HEK293 (cell line): ENCODE measurements at regions of chr19 and their contacts with region 1.

Region 1: GRCh38 chr19:49200238-49200862 is 42.8 kb downstream of the TRPM4 start:
- H3K4me3 ChIP-seq: no peak overlapping the region
- H3K27ac ChIP-seq: no peak overlapping the region
- H3K4me1 ChIP-seq: no peaks in the 10 kb centered on the region
- CTCF ChIP-seq: no peak

Region 2: GRCh38 chr19:48999481-49000325 is 200.6 kb before region 1 on chr19:
- CTCF ChIA-PET with region 1: interaction called, 18 read pairs
- POLR2A ChIA-PET with region 1: no interaction called
- H3K4me3 ChIP-seq: no peak overlapping the region
- H3K27ac ChIP-seq: no peak overlapping the region
- H3K4me1 ChIP-seq: 0 out of 2 replicates have a peak, but pooled peaks cover 3% of the 10 kb centered on the region
- CTCF ChIP-seq: peak; percentile 59; the same call in 1 of the 2 replicates

Region 3: GRCh38 chr19:49097455-49098288 is 102.7 kb before region 1 on chr19:
- CTCF ChIA-PET with region 1: interaction called, 105 read pairs
- POLR2A ChIA-PET with region 1: interaction called, 7 read pairs
- H3K4me3 ChIP-seq: no peak overlapping the region
- H3K27ac ChIP-seq: peak overlapping the region; percentile 48
- H3K4me1 ChIP-seq: peaks cover 8% of the 10 kb centered on the region
- CTCF ChIP-seq: peak; percentile 94

Region 4: GRCh38 chr19:49113762-49114629 is 86.4 kb before region 1 on chr19 and contains the start of gene LIN7B:
- CTCF ChIA-PET with region 1: interaction called, 24 read pairs
- POLR2A ChIA-PET with region 1: interaction called, 5 read pairs
- H3K4me3 ChIP-seq: peak within 1 kb of the TSS; percentile 69
- H3K27ac ChIP-seq: peak within 1 kb of the TSS; percentile 84
- H3K4me1 ChIP-seq: peaks cover 14% of the 10 kb centered on the region
- CTCF ChIP-seq: peak; percentile 31; the same call in 1 of the 2 replicates

Region 5: GRCh38 chr19:49148784-49149651 is 51.3 kb before region 1 on chr19:
- CTCF ChIA-PET with region 1: interaction called, 70 read pairs
- POLR2A ChIA-PET with region 1: interaction called, 4 read pairs
- H3K4me3 ChIP-seq: peak overlapping the region; percentile 69
- H3K27ac ChIP-seq: peak overlapping the region; percentile 70
- H3K4me1 ChIP-seq: peaks cover 6% of the 10 kb centered on the region
- CTCF ChIP-seq: no peak

Region 6: DNA sequence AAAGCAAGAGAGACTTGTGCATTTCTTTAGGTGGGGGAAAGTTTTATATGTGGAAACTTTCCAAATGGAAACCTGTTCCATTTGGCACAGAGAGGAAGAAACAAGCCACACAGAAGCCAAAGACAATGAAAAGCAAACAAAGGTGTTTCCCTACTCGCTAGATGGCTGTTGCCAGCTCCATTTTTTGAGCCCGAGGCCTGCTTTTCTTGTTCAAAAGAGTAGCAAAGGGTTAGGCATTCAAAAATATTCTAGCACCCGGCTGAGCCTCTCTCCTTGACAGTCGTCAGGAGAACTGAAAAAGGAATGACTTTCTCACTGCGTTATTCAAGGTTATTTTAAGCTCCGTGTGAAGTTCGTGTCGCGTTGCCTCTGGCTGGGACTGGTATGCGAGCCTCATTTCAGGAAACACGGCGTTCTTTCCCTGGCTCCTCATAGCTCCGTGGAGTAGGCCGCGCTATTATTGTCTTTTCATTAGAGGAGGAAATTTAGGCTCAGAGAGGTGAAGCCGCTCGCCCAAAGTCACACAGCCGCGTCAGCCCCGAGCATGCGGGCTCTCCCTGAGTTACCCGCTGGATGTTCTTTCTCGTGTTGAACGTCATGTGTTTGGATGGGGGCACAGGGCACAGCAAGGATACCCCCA is 35.1 kb before region 1 on chr19:
- CTCF ChIA-PET with region 1: interaction called, 17 read pairs
- POLR2A ChIA-PET with region 1: no interaction called
- H3K4me3 ChIP-seq: no peak overlapping the region
- H3K27ac ChIP-seq: no peak overlapping the region
- H3K4me1 ChIP-seq: no peaks in the 10 kb centered on the region
- CTCF ChIP-seq: no peak

Region 7: DNA sequence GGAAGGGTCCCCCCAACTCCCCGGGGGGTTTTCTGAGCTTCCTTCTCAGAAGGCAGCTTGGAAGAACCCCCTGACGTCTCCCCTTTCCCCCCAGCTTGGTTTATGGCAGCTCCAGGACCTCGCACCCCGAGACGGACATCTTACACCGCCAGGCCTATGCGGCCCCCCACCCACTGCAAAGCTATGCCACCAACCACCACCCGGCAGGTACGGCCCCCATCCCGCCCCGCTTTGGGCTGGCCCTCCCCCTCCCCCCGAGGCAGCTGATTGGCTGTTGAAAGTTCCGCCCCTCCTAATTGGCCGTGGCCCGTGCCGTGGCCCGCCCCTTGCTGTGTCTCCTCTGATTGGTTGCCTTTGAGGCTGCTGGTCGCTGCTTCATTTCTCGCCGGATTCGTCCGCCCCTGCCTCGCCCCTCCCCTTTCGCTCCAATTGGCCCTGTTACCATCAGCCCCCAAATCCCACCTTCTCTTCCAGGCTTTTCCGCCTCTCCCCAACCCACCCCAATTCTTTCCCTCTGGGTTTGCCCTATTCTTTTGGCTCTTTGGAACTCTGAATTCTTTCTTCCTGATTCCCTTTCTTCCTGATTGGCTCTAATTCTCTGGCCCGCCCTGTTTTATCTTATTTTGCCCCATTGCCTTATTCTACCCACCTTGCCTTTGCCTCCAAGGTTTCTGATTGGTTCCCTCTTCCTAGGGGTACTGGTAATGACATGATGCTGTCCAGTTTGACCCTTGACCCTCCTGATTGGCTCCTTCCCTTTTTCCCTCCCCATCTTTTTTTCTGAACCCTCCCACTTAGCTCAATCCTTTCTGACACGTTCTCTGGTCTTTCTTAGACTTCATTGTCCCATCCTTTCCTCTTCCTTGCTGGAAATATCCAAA is 393.1 kb after region 1 on chr19:
- CTCF ChIA-PET with region 1: no interaction called
- POLR2A ChIA-PET with region 1: no interaction called
- H3K4me3 ChIP-seq: peak overlapping the region; percentile 82
- H3K27ac ChIP-seq: peak overlapping the region; percentile 98
- H3K4me1 ChIP-seq: peaks cover 7% of the 10 kb centered on the region
- CTCF ChIP-seq: no peak